AG04449 (cell line): ENCODE measurements at regions of chr1 and their contacts with region 1.

Region 1: GRCh38 chr1:155017041-155017945 is 14.7 kb downstream of the ZBTB7B start:
- DNase-seq: peak; percentile 14
- H3K4me3 ChIP-seq: peak overlapping the region; percentile 43
- CTCF ChIP-seq: peak; percentile 100

Region 2: DNA sequence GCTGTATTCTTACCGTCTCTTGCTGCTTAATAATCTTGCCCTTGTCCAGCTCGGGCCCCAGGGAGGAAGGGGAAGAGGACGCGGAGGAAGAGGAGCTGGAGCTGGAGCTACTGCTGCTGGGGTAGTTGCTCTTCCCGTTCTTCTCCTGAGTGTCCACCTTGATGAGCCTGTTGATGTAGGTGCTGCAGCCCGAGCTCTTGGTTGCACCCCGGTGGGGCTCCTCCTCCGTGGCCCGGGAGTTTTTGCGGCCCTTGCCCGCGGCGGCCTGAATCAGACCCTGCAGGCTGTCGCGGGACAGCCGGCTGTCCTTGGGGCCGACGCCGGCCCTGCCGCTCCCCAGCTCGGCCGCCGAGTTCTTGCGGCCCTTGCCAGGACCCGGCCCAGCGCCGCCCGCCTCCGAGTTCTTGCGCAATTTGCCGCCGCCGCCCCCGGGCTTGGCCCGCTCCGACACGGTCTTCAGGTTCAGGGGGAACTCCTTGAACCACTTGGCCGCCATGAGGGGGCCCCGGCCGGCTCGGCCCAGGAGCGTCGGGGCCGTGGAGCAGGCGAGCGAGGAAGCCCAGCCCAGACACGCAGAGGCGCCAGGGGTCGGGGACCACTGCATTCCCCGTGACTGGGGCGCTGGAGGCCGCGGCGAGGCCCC is 515.7 kb before region 1 on chr1:
- CTCF ChIA-PET with region 1: no interaction called
- POLR2A ChIA-PET with region 1: no interaction called
- DNase-seq: no peak
- H3K4me3 ChIP-seq: no peak overlapping the region
- CTCF ChIP-seq: no peak

Region 3: GRCh38 chr1:154936555-154937084 is 80.7 kb before region 1 on chr1 and contains the start of gene PMVK:
- CTCF ChIA-PET with region 1: interaction called, 12 read pairs
- POLR2A ChIA-PET with region 1: no interaction called
- DNase-seq: peak; percentile 76
- H3K4me3 ChIP-seq: peak within 1 kb of the TSS; percentile 95
- CTCF ChIP-seq: peak; percentile 46

Region 4: DNA sequence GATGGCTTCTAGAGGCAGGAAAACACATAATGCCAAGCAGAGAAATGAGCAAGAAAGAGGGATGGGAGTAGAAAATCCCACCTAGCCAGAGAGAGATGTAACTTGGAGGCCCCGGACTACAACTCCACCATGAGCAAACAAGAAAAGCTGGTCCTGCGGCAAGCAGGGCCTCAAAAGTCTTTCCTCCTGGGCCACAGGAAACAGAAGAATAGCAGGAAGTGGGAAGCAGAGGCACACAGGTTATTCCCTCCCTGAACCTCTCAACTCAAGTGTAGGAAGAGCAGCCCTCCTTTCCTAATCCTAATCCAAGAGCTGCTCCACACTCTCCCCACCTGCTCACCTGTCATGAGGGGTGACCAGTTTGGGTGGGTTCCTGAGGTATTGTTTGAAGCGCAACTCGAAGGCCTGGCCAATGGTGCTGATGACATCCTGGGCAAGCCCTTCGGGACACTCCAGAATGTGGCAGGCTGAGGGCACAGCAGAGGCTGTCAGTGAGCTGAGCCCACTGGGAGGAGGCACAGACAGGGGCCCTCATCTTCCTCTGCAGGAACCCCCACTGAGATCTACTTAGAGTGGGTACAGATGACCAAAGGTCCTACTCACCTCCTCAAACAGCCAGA is 49.9 kb before region 1 on chr1:
- CTCF ChIA-PET with region 1: interaction called, 19 read pairs
- POLR2A ChIA-PET with region 1: interaction called, 6 read pairs
- DNase-seq: no peak
- H3K4me3 ChIP-seq: peak overlapping the region; percentile 82
- CTCF ChIP-seq: no peak

Region 5: GRCh38 chr1:155001675-155002463 is 15.4 kb before region 1 on chr1:
- CTCF ChIA-PET with region 1: interaction called, 244 read pairs
- POLR2A ChIA-PET with region 1: interaction called, 3 read pairs
- DNase-seq: peak; percentile 85
- H3K4me3 ChIP-seq: peak overlapping the region; percentile 93
- CTCF ChIP-seq: peak; percentile 60

Region 6: DNA sequence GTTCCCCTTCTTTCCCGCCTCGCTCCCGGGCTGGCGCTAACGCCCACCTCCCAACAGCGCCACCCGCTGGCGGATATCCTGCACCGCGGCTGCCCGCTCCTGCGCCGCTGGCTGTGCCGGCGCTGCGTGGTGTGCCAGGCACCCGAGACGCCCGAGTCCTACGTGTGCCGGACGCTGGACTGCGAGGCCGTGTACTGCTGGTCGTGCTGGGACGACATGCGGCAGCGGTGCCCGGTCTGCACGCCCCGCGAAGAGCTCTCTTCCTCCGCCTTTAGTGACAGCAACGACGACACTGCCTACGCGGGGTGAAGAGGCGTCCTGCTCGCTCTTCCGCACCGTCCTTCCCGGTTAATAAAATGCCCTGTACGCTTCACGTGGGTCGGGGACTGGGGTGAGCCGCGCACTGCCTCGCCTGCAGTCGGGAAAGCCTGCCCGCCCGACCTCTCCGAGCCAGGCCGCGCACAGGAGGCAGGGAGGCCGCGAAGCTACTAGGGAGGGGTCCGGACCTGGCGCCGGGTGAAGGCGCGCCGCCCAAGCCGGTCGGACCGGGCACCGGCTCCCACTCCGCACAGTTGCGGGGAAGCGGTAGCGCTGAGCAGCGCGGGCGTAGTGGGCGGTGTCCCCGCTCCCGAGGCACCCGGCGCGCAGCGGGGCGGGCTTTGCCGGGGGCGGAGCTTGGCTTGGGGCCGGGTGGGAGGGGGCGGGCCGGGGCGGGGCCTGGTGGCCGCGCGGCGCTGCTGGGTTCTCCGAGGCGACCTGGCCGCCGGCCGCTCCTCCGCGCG is 33.5 kb after region 1 on chr1 and contains the start of gene ADAM15:
- CTCF ChIA-PET with region 1: interaction called, 176 read pairs
- POLR2A ChIA-PET with region 1: no interaction called
- DNase-seq: no peak
- H3K4me3 ChIP-seq: peak within 1 kb of the TSS; percentile 71
- CTCF ChIP-seq: peak; percentile 92

Region 7: DNA sequence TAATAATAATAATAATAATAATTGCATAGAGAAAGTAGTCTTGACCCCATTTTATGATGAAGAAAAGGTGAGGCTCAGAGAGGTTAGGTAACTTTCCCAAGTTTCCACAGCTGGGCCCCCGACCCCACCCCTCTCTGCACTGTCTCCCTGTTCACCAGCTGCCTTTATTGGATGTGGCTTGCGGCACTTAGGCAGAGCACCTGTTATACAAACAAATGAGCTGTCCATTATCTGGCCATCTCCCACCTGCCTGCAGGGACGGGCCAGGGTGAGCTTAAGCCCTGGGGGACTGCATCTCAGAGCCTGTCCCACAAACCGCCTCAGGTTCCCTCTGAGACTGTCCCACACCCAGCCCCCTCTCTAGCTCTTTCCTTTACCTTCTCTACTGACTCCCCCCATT is 100.3 kb after region 1 on chr1:
- CTCF ChIA-PET with region 1: no interaction called
- POLR2A ChIA-PET with region 1: no interaction called
- DNase-seq: no peak
- H3K4me3 ChIP-seq: no peak overlapping the region
- CTCF ChIP-seq: no peak